IMR-90 (cell line): ENCODE measurements at regions of chr20 and their contacts with region 1.

Region 1: GRCh38 chr20:49846206-49846807 is 33.7 kb downstream of the SLC9A8 start:
- DNase-seq: peak; percentile 58
- ATAC-seq: peak; percentile 89
- H3K4me3 ChIP-seq: no peak overlapping the region
- H3K27ac ChIP-seq: no peak overlapping the region
- H3K4me1 ChIP-seq: peaks cover 2% of the 10 kb centered on the region; the same call in 1 of the 2 replicates
- H3K27me3 ChIP-seq: no peaks in the 10 kb centered on the region
- CTCF ChIP-seq: peak; percentile 69
- POLR2A ChIP-seq: no peak
- RAD21 ChIP-seq: peak; percentile 75

Region 2: DNA sequence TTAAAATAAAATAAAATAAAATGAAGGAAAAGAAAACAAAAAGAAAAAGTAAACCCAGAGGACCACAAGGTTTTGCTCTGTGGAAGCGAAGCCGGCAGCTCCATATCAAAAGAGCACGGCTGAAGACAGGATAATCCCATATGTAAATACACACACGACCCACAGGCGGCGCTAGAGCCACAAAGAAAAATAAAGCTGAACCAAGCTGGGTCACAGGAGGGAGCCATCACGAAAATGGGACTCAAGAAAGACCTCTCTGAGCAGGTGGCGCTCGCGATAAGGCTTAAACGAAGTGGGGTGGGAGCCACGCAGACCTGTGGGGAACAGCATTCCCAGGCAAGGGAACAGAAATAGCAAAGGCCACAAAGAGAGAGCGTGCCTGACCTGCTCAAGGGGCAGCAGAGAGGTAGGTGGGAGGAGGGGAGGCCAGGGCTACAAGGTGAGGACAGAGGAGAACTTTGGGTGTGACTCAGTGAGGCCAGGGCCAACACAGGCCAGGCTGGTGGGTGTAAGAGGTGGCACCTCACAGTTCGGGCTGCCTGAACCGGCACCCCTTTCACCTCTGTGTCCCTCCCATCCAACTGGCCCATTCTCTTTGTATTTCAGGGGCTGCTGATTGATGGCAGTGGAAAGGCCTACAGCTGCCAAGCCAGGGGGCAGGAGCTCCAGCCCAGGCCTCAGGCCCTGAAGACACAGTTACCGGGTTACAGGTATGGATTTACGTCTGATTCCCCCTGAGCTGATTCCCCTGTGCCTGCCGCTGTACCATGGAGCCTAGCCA is 304.4 kb before region 1 on chr20:
- CTCF ChIA-PET with region 1: no interaction called
- POLR2A ChIA-PET with region 1: no interaction called
- dilution Hi-C with region 1: no loop called
- in situ Hi-C with region 1: loop called (anchors 5 kb)
- intact Hi-C with region 1: loop called (anchors 5 kb)
- DNase-seq: peak; percentile 63
- ATAC-seq: peak; percentile 93
- H3K4me3 ChIP-seq: no peak overlapping the region
- H3K27ac ChIP-seq: no peak overlapping the region
- H3K4me1 ChIP-seq: no peaks in the 10 kb centered on the region
- H3K27me3 ChIP-seq: peaks cover 4% of the 10 kb centered on the region; the same call in 1 of the 2 replicates
- CTCF ChIP-seq: peak; percentile 94
- POLR2A ChIP-seq: no peak
- RAD21 ChIP-seq: peak; percentile 90